Dorsolateral prefrontal cortex (tissue), 120 donors: ENCODE measurements at regions of chr4 and their contacts with region 1.

Region 1: DNA sequence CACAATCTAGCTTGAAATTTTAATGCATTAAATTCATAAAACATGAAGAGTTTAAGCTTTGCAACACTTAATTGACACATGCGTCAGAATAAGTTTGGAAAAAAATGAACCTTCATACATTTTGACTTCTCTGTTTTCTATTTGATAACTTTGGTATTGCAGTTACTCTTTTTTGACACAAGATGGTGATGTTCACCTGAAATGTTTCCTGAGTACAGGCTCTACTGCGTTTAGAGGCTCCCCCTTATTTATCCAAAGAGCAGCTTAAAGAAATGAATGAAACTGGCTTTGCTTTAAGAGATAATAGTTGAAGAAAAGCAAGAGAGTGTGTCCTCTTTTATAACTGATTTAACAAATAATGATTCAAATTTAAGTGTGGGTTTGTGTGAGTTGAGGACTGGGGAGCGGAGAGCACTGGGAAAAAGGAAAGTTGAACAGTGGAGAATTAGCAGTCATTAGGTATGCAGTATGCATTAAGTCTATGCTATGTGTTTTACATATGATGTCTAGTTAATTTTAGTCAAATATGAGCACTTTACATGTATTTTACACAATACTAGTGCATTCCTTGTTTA is 180.6 kb upstream of the NUDT6 start:
- DNase-seq: no peak
- H3K4me3 ChIP-seq: no peak overlapping the region
- H3K27ac ChIP-seq: no peak overlapping the region
- H3K27me3 ChIP-seq: no peaks in the 10 kb centered on the region
- CTCF ChIP-seq: peak; percentile 50 to 81 (median 72)

Region 2: GRCh38 chr4:123250843-123251242 is 147.9 kb after region 1 on chr4:
- intact Hi-C with region 1: no loop called
- DNase-seq: no peak
- H3K4me3 ChIP-seq: no peak overlapping the region
- H3K27ac ChIP-seq: no peak overlapping the region
- H3K27me3 ChIP-seq: no peaks in the 10 kb centered on the region
- CTCF ChIP-seq: no peak

Region 3: GRCh38 chr4:124262211-124263179 is 1159.5 kb after region 1 on chr4:
- intact Hi-C with region 1: loop called in 1 of 2 experiments (anchors 10 kb)
- DNase-seq: peak in 7 of 10 donors; percentile 21 to 60 (median 49)
- H3K4me3 ChIP-seq: no peak overlapping the region
- H3K27ac ChIP-seq: no peak overlapping the region
- H3K27me3 ChIP-seq: no peaks in the 10 kb centered on the region
- CTCF ChIP-seq: peak; percentile 46 to 96 (median 78)